ENCODE measurements at regions of chr3 and their contacts with region 1.

Region 1: GRCh38 chr3:142542054-142542453 is 36.5 kb downstream of the ATR start:
- DNase-seq: no peak
- ATAC-seq: no peak
- H3K4me3 ChIP-seq: no peak overlapping the region
- H3K27ac ChIP-seq: no peak overlapping the region
- H3K4me1 ChIP-seq: no peaks in the 10 kb centered on the region
- CTCF ChIP-seq: no peak
- EP300 ChIP-seq: no peak
- POLR2A ChIP-seq: no peak
- RAD21 ChIP-seq: no peak

Region 2: DNA sequence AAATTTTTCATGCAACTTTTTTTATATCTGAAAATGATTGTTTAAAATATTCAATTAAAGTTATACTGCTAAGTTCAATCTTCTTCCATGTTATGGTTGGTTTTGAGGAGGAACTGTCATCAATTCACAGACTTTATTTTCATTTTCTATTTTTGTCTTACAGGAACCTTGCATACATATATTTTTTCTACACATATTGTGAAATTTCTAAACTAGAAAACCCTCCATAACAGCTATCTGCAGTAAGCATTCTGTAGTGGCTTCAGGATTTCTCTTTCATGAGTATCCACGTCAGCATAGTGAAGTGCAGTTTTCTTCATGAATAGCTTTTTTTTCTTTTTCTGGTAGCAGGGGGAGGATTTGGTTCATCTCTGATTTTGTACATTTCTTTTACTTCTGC is 11.8 kb before region 1 on chr3:
- CTCF ChIA-PET with region 1: no interaction called
- POLR2A ChIA-PET with region 1: interaction called, 12 read pairs
- DNase-seq: no peak
- ATAC-seq: no peak
- H3K4me3 ChIP-seq: no peak overlapping the region
- H3K27ac ChIP-seq: no peak overlapping the region
- H3K4me1 ChIP-seq: no peaks in the 10 kb centered on the region
- CTCF ChIP-seq: no peak
- EP300 ChIP-seq: no peak
- POLR2A ChIP-seq: no peak
- RAD21 ChIP-seq: no peak